AG04449 (cell line): ENCODE measurements at regions of chr3 and their contacts with region 1.

Region 1: DNA sequence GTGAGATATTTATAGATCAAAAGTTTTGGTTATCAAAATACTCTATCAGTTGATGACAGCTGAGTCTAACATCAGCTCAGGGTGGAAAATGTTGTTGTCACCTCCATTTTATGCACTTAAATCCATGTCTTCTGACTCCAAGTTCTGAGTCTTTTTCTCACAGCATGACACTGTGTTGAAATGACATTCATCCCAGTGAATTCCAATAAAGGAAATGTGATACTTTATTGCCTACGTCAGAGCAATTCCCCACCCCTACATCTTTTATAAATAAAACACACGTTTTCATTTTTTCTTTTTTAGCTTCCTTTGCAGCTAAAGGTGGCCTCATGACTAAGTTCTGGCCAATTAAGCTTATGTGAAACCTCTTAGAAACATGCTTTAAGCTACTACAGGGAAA is 10.7 kb downstream of the DRD3 start:
- DNase-seq: no peak
- H3K4me3 ChIP-seq: no peak overlapping the region
- CTCF ChIP-seq: no peak

Region 2: DNA sequence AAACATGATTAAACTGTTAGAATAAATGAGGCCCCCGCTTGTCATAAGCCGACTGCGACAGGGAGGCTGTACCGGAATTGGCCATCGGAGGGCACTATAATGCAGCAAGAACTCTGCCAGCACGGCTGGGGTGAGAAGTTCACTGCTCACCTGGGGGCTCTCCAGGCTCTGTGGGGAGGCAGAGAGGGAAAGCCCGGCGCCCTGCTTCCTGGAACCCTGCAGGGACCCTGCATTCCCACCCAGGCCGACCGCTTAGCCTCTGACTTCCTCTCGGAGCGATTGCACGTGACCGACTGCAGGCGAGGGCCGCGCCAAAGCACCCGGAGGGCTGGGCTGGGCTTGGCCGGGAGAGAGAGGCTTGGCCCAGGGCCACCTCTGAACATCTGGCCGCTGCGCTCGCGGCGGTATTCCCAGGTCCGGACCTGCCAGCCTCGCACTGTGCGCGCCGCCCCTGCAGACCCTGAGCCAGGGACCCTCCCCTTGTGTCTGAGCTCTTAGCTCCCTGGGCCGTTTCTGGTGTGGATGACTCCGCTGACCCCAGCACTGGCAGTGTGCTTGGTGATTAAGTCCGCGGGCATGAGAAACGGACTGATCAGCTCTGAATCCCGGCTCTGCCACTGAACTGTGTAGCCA is 15.5 kb before region 1 on chr3:
- CTCF ChIA-PET with region 1: interaction called, 29 read pairs
- POLR2A ChIA-PET with region 1: no interaction called
- DNase-seq: no peak
- H3K4me3 ChIP-seq: peak overlapping the region; percentile 60
- CTCF ChIP-seq: peak; percentile 87